GM12878 (cell line): ENCODE measurements at regions of chr19 and their contacts with region 1.

Region 1: GRCh38 chr19:10565567-10566407 is at the start of gene KRI1:
- DNase-seq: peak; percentile 88
- ATAC-seq: peak; percentile 69
- H3K4me3 ChIP-seq: peak within 1 kb of the TSS; percentile 80
- H3K27ac ChIP-seq: peak within 1 kb of the TSS; percentile 88
- H3K4me1 ChIP-seq: peaks cover 23% of the 10 kb centered on the region
- H3K27me3 ChIP-seq: no peaks in the 10 kb centered on the region
- CTCF ChIP-seq: peak in 2 of 3 experiments; percentile 5 to 24; a peak in 1 of 6 replicates
- EP300 ChIP-seq: peak in 1 of 2 experiments; percentile 10; a peak in 1 of 4 replicates
- POLR2A ChIP-seq: peak; percentile 93
- RAD21 ChIP-seq: no peak
- polyA plus RNA-seq, gene KRI1: 0.98 to 3.4 TPM

Region 2: GRCh38 chr19:10416380-10417257 is 149.2 kb before region 1 on chr19:
- CTCF ChIA-PET with region 1: interaction called, 4 read pairs
- POLR2A ChIA-PET with region 1: interaction called, 4 read pairs
- RAD21 ChIA-PET with region 1: interaction called, 5 read pairs
- SMC1A ChIA-PET with region 1: interaction called, 3 read pairs
- in situ Hi-C with region 1: loop called (anchors 5 kb)
- intact Hi-C with region 1: no loop called
- DNase-seq: peak; percentile 60
- ATAC-seq: peak; percentile 53
- H3K4me3 ChIP-seq: peak overlapping the region; percentile 71
- H3K27ac ChIP-seq: peak overlapping the region; percentile 72
- H3K4me1 ChIP-seq: peaks cover 51% of the 10 kb centered on the region
- H3K27me3 ChIP-seq: peaks cover 0 to 16% of the 10 kb centered on the region in 2 experiments; a peak in 3 of 4 replicates
- CTCF ChIP-seq: peak; percentile 80 to 86 (median 81)
- EP300 ChIP-seq: peak in 1 of 2 experiments; percentile 74; a peak in 2 of 4 replicates
- POLR2A ChIP-seq: no peak; the same call in 1 of the 2 replicates
- RAD21 ChIP-seq: peak; percentile 41; the same call in 1 of the 2 replicates

Region 3: GRCh38 chr19:10478903-10479384 is 86.8 kb before region 1 on chr19:
- CTCF ChIA-PET with region 1: interaction called, 23 read pairs
- POLR2A ChIA-PET with region 1: interaction called, 7 read pairs
- RAD21 ChIA-PET with region 1: interaction called, 9 read pairs
- SMC1A ChIA-PET with region 1: no interaction called
- in situ Hi-C with region 1: no loop called
- intact Hi-C with region 1: no loop called
- DNase-seq: no peak
- ATAC-seq: peak; percentile 70
- H3K4me3 ChIP-seq: no peak overlapping the region
- H3K27ac ChIP-seq: no peak overlapping the region
- H3K4me1 ChIP-seq: no peaks in the 10 kb centered on the region
- H3K27me3 ChIP-seq: no peaks in the 10 kb centered on the region; a peak in 1 of 4 replicates
- CTCF ChIP-seq: peak; percentile 16 to 56 (median 27); a peak in 5 of 6 replicates
- EP300 ChIP-seq: no peak
- POLR2A ChIP-seq: no peak
- RAD21 ChIP-seq: peak; percentile 10; the same call in 1 of the 2 replicates

Region 4: GRCh38 chr19:10525624-10526023 is 40.2 kb before region 1 on chr19:
- CTCF ChIA-PET with region 1: no interaction called
- POLR2A ChIA-PET with region 1: no interaction called
- RAD21 ChIA-PET with region 1: no interaction called
- SMC1A ChIA-PET with region 1: no interaction called
- in situ Hi-C with region 1: no loop called
- intact Hi-C with region 1: no loop called
- DNase-seq: no peak
- ATAC-seq: no peak
- H3K4me3 ChIP-seq: no peak overlapping the region
- H3K27ac ChIP-seq: no peak overlapping the region
- H3K4me1 ChIP-seq: no peaks in the 10 kb centered on the region
- H3K27me3 ChIP-seq: no peaks in the 10 kb centered on the region
- CTCF ChIP-seq: no peak
- EP300 ChIP-seq: no peak
- POLR2A ChIP-seq: no peak
- RAD21 ChIP-seq: no peak

Region 5: GRCh38 chr19:10543420-10544241 is 22.2 kb before region 1 on chr19 and contains the start of gene ATG4D:
- CTCF ChIA-PET with region 1: interaction called, 35 read pairs
- POLR2A ChIA-PET with region 1: interaction called, 9 read pairs
- RAD21 ChIA-PET with region 1: interaction called, 16 read pairs
- SMC1A ChIA-PET with region 1: interaction called, 7 read pairs
- in situ Hi-C with region 1: no loop called
- intact Hi-C with region 1: loop called (anchors 1 kb)
- DNase-seq: no peak
- ATAC-seq: peak; percentile 91
- H3K4me3 ChIP-seq: peak within 1 kb of the TSS; percentile 93
- H3K27ac ChIP-seq: peak within 1 kb of the TSS; percentile 83
- H3K4me1 ChIP-seq: peaks cover 11% of the 10 kb centered on the region
- H3K27me3 ChIP-seq: peaks cover 0 to 4% of the 10 kb centered on the region in 2 experiments; a peak in 1 of 4 replicates
- CTCF ChIP-seq: no peak
- EP300 ChIP-seq: no peak
- POLR2A ChIP-seq: peak; percentile 95
- RAD21 ChIP-seq: no peak
- polyA plus RNA-seq, gene ATG4D: 0.39 to 2.3 TPM

Region 6: GRCh38 chr19:10653715-10654492 is 88.1 kb after region 1 on chr19 and contains the start of gene ILF3:
- CTCF ChIA-PET with region 1: no interaction called
- POLR2A ChIA-PET with region 1: interaction called, 4 read pairs
- RAD21 ChIA-PET with region 1: no interaction called
- SMC1A ChIA-PET with region 1: no interaction called
- in situ Hi-C with region 1: no loop called
- intact Hi-C with region 1: loop called (anchors 5 kb)
- DNase-seq: peak; percentile 100
- ATAC-seq: peak; percentile 83
- H3K4me3 ChIP-seq: peak within 1 kb of the TSS; percentile 91
- H3K27ac ChIP-seq: peak within 1 kb of the TSS; percentile 99
- H3K4me1 ChIP-seq: peaks cover 6% of the 10 kb centered on the region
- H3K27me3 ChIP-seq: no peaks in the 10 kb centered on the region
- CTCF ChIP-seq: no peak
- EP300 ChIP-seq: peak; percentile 52 to 54
- POLR2A ChIP-seq: peak; percentile 89
- RAD21 ChIP-seq: no peak
- polyA plus RNA-seq, gene ILF3: 28.1 to 38.1 TPM